ENCODE measurements at regions of chr7 and their contacts with region 1.

Region 1: DNA sequence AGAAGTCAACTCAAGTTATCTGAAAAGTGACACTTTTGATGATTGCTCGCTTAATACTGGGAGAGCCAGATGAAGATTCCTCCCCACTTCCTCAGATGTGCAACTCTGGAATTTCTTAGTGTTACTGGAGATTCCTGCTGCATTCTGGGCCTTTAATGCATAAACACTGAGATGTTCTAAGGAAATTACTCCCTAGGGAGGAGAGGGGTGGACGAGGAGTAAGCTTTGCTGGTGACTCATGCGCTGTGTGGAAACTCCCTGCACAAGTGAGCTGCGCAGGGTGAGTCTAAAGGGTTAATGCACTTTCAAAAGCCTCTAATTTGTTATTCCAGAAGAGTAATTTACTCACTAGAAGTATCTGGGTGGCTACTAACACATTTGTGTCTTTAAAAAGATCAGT is 46.3 kb downstream of the EGFR start:
- DNase-seq: peak; percentile 93
- H3K4me3 ChIP-seq: no peak overlapping the region
- H3K27ac ChIP-seq: peak overlapping the region; percentile 98
- H3K27me3 ChIP-seq: no peaks in the 10 kb centered on the region
- CTCF ChIP-seq: no peak

Region 2: GRCh38 chr7:54811041-54811845 is 253.8 kb before region 1 on chr7:
- CTCF ChIA-PET with region 1: no interaction called
- POLR2A ChIA-PET with region 1: interaction called, 14 read pairs
- DNase-seq: peak; percentile 74
- H3K4me3 ChIP-seq: peak overlapping the region; percentile 17; the same call in 1 of the 2 replicates
- H3K27ac ChIP-seq: peak overlapping the region; percentile 96
- H3K27me3 ChIP-seq: no peaks in the 10 kb centered on the region
- CTCF ChIP-seq: no peak

Region 3: DNA sequence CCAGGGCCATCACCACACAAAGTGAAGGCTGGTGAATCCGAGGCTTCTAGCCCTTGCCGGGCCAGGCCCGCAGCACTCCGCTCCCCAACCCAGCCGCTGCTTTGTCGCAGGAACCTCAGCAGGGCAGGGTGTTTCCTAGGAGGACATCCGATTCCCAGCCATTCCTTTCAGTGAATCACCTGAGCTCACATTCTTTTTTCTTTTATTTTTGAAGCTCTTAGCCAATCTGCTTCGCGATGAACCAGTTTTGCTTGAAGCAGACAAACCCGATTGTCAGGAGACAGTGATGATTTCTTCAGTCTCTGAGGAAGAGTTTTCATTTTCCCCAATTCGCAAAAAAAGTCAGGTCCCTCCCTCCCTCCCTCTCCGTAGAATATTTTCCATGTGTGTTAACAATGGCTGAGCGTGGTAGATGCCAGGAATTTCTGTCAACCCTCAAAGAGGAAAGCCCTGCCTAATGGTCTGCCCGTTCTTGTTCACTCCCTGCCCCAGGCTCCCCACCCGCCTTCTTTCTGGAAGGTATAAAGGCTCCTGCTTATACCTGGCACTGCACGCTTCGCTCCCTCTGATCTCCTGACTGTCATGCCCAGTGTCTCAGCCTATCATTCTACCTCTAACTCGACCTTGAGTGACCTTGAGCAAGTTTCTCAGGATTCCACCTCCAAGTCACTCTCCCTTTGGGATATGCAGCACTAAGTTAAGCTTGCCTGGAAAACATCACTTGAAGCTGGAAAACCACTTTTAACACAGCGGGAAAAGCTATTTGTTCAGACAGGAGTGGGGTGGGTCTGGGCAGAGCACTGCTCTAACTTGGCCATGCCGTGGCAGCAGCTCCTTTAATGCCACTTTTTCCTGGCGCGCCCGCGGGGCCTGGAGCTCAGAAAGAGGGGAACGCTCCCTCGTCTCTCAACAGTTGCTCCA is 11.2 kb before region 1 on chr7:
- CTCF ChIA-PET with region 1: no interaction called
- POLR2A ChIA-PET with region 1: interaction called, 17 read pairs
- DNase-seq: no peak
- H3K4me3 ChIP-seq: no peak overlapping the region
- H3K27ac ChIP-seq: peak overlapping the region; percentile 93
- H3K27me3 ChIP-seq: no peaks in the 10 kb centered on the region
- CTCF ChIP-seq: no peak

Region 4: DNA sequence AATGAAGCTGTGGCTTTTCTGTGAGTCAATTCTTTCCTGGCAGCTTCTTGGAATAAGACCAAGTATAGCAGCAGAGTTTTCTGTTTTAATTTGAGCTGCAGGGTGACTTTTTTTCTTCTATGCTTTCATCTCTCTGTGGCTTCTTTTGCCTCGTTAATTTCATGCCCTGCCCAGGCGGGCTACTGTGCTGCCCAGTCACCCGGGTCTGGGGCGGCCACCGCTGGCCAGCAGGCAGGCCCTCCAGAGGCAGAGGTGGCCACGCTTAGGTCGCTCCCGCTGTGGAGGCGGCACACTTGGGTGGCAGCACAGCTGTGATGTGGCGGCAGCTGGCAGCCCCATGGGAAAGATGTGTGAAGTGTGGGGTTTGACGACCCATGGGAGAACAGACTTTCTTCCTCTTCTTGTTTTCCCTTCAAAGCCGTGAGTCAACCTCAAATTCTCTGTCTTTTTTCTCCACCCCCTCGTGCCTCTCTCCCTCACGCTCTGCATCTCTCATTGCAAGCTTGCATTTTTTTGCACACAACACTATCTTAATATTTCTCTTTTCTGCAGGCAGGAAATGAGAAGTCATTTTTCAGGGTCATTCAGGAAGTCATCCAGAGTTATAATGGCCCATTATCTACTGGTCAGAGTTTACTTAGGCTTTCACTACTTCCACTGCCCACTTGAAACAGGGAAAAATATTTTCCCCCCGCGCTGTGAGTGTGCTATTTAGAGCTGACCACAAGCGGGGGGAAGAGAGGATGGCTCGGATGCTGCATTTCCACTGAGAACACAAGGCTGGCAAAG is 21.5 kb after region 1 on chr7:
- CTCF ChIA-PET with region 1: interaction called, 4 read pairs
- POLR2A ChIA-PET with region 1: interaction called, 23 read pairs
- DNase-seq: peak; percentile 45
- H3K4me3 ChIP-seq: peak overlapping the region; percentile 52
- H3K27ac ChIP-seq: peak overlapping the region; percentile 97
- H3K27me3 ChIP-seq: no peaks in the 10 kb centered on the region
- CTCF ChIP-seq: no peak

Region 5: GRCh38 chr7:55207436-55208125 is 142.5 kb after region 1 on chr7:
- CTCF ChIA-PET with region 1: no interaction called
- POLR2A ChIA-PET with region 1: interaction called, 15 read pairs
- DNase-seq: no peak
- H3K4me3 ChIP-seq: no peak overlapping the region
- H3K27ac ChIP-seq: no peak overlapping the region
- H3K27me3 ChIP-seq: no peaks in the 10 kb centered on the region
- CTCF ChIP-seq: no peak

Measured in AG04450 (cell line).